OCI-LY7 (cell line): ENCODE measurements at regions of chr1 and their contacts with region 1.

Region 1: GRCh38 chr1:229341774-229342655 is 832 bp downstream of the CCSAP start:
- DNase-seq: peak; percentile 90
- H3K4me3 ChIP-seq: peak overlapping the region; percentile 79
- H3K27ac ChIP-seq: peak overlapping the region; percentile 70
- H3K4me1 ChIP-seq: peaks cover 38% of the 10 kb centered on the region
- CTCF ChIP-seq: no peak

Region 2: DNA sequence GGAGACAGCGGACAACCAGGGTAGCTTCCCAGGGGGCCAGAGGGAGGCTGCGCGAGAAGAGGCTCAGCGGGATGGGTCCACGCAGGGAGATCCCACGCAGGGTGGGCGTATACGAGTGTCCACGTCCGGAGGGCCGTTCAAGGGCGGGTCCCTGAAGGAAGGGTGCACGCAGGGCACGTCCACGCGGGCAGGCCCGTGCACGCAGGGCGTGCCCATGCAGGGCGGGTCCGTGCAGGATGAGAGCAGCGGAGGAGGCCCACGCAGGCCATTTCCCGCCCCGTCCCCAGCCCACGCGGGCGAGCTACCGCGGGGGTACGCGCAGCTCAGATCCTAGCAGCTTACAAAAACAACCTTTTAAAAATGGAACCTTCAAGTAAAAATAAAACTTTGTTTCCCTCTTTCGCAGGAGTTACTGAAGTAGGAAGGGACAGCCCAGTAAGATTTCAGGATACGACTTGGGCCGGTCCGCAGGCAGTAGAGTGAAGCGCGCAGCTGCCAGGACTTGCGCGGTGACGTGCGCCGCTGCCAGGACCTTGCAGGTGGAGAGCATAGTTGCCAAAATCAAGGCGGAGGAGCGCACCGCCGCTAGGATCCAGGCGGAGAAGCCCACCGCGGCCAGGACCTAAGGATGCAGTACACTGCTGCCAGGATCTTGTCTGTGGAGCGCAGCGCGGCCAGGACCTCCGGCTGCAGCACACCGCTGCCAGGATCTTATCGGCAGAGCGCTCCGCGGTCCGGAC is 855.2 kb before region 1 on chr1:
- CTCF ChIA-PET with region 1: no interaction called
- POLR2A ChIA-PET with region 1: no interaction called
- intact Hi-C with region 1: loop called (anchors 5 kb)
- DNase-seq: peak; percentile 94
- H3K4me3 ChIP-seq: peak overlapping the region; percentile 97
- H3K27ac ChIP-seq: peak overlapping the region; percentile 92
- H3K4me1 ChIP-seq: peaks cover 41% of the 10 kb centered on the region
- CTCF ChIP-seq: no peak

Region 3: GRCh38 chr1:228927946-228928898 is 413.8 kb before region 1 on chr1:
- CTCF ChIA-PET with region 1: no interaction called
- POLR2A ChIA-PET with region 1: no interaction called
- intact Hi-C with region 1: no loop called
- DNase-seq: no peak
- H3K4me3 ChIP-seq: no peak overlapping the region
- H3K27ac ChIP-seq: no peak overlapping the region
- H3K4me1 ChIP-seq: no peaks in the 10 kb centered on the region
- CTCF ChIP-seq: no peak

Region 4: DNA sequence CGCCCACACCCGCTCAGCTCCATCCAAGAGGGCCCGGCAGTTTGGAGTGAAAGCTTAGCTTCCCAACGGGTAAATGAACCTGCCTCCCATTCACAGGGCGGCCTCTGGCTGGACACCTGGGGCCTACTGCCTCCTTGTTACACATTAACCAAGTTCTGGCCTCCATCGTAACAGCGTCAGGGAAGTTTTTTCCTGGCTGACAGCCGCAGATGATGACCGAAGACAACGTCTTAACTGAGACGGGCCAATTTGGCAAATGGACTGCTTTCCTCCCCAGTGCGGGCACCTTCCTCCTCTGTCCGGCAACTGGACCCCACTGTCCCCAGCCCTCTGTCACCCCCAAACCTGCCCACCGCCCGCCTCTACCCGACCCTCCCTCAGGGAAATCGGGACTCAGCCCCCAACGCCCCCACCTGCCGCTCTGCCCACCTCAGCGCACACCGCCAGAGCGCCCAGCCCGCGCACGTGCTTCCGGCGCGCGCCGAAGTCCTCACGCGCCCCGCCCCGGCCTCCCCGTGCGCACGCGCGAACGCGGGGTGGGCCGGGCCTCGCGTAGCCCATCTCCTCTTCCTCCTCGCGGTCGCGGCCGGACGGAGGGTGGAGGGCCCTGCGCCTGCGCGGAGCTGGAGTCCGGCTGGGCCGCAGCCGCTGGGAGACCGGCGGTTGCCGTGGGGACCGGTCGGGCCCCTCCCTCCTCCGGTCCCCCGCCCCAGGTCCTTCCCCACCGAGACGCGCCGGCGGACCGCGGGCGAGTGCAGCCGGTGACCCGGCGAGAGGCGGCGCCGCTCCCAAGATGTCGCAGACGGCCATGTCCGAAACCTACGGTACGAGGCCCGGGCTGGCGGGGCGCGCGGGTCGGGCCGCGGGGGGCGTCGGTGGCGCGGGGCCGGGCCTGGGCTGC is 71.2 kb before region 1 on chr1 and contains the start of gene RAB4A:
- CTCF ChIA-PET with region 1: no interaction called
- POLR2A ChIA-PET with region 1: interaction called, 3 read pairs
- intact Hi-C with region 1: loop called (anchors 2 kb)
- DNase-seq: peak; percentile 77
- H3K4me3 ChIP-seq: peak within 1 kb of the TSS; percentile 73
- H3K27ac ChIP-seq: no peak within 1 kb of the TSS
- H3K4me1 ChIP-seq: peaks cover 15% of the 10 kb centered on the region
- CTCF ChIP-seq: no peak
- total RNA-seq, gene RAB4A: 20.0 and 27.9 TPM in 2 replicates

Region 5: GRCh38 chr1:229403573-229403972 is 61.6 kb after region 1 on chr1:
- CTCF ChIA-PET with region 1: no interaction called
- POLR2A ChIA-PET with region 1: no interaction called
- intact Hi-C with region 1: no loop called
- DNase-seq: no peak
- H3K4me3 ChIP-seq: no peak overlapping the region
- H3K27ac ChIP-seq: no peak overlapping the region
- H3K4me1 ChIP-seq: no peaks in the 10 kb centered on the region
- CTCF ChIP-seq: no peak

Region 6: GRCh38 chr1:229479660-229480399 is 137.8 kb after region 1 on chr1:
- CTCF ChIA-PET with region 1: no interaction called
- POLR2A ChIA-PET with region 1: interaction called, 6 read pairs
- intact Hi-C with region 1: loop called (anchors 5 kb)
- DNase-seq: peak; percentile 76
- H3K4me3 ChIP-seq: no peak overlapping the region
- H3K27ac ChIP-seq: peak overlapping the region; percentile 26
- H3K4me1 ChIP-seq: peaks cover 31% of the 10 kb centered on the region
- CTCF ChIP-seq: no peak

Region 7: GRCh38 chr1:229507951-229508822 is 166.2 kb after region 1 on chr1 and contains the start of gene NUP133:
- CTCF ChIA-PET with region 1: no interaction called
- POLR2A ChIA-PET with region 1: interaction called, 3 read pairs
- intact Hi-C with region 1: loop called (anchors 5 kb)
- DNase-seq: peak; percentile 98
- H3K4me3 ChIP-seq: peak within 1 kb of the TSS; percentile 93
- H3K27ac ChIP-seq: peak within 1 kb of the TSS; percentile 69
- H3K4me1 ChIP-seq: peaks cover 24% of the 10 kb centered on the region
- CTCF ChIP-seq: no peak
- total RNA-seq, gene NUP133: 33.0 and 33.3 TPM in 2 replicates

Region 8: GRCh38 chr1:229558571-229559335 is 216.7 kb after region 1 on chr1 and contains the start of gene ABCB10:
- CTCF ChIA-PET with region 1: no interaction called
- POLR2A ChIA-PET with region 1: no interaction called
- intact Hi-C with region 1: loop called (anchors 1 kb)
- DNase-seq: peak; percentile 98
- H3K4me3 ChIP-seq: peak within 1 kb of the TSS; percentile 79
- H3K27ac ChIP-seq: peak within 1 kb of the TSS; percentile 52
- H3K4me1 ChIP-seq: peaks cover 17% of the 10 kb centered on the region
- CTCF ChIP-seq: peak; percentile 80
- total RNA-seq, gene ABCB10: 14.1 and 16.4 TPM in 2 replicates

Region 9: GRCh38 chr1:229625915-229626831 is 284.2 kb after region 1 on chr1 and contains the starts of genes TAF5L and URB2:
- CTCF ChIA-PET with region 1: no interaction called
- POLR2A ChIA-PET with region 1: no interaction called
- intact Hi-C with region 1: loop called (anchors 5 kb)
- DNase-seq: peak; percentile 92
- H3K4me3 ChIP-seq: peak within 1 kb of the TSS; percentile 91
- H3K27ac ChIP-seq: peak within 1 kb of the TSS; percentile 57
- H3K4me1 ChIP-seq: peaks cover 30% of the 10 kb centered on the region
- CTCF ChIP-seq: no peak
- total RNA-seq, gene TAF5L: 23.5 and 32.9 TPM in 2 replicates
- total RNA-seq, gene URB2: 27.0 and 30.2 TPM in 2 replicates